HEK293T (cell line): ENCODE measurements at regions of chr14 and their contacts with region 1.

Region 1: DNA sequence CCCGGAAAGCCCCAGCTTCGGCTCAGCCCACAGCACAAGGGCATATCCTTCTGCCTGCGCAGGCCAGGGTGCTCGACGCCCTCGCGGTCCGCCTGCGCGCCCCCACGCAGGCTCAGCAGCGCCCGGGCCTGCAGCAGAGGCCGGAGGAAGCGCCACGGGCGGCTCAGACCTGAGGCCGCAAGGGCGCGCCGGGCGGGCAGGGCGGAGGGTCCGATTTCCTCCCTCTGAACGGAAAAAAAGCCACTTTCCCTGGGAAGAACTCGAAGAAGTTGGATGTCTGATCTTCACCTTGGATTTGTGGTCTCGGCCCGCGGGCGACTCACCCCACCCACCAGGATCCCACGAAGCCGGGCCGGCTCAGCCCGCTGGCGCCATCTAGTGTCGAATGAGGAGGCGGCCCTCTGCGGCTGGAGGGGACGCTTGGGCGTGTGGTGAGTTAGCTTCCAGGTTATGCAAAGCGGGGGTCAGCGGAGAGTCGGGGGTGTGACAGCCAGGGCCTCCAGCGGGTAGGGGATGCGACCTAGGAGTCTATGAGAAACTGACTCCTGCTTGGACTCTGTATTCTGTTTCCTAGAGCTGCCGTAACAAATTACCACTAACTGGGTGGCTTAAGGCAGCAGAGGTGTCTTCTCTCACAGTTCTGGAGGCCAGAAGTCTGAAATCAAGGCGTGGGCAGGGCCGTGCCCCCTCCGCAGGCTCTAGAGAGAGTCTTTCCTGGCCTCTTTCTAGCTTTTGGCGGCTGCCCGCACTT is 40.0 kb upstream of the SRSF5 start:
- DNase-seq: peak; percentile 89

Region 2: GRCh38 chr14:69451956-69452355 is 275.0 kb before region 1 on chr14:
- CTCF ChIA-PET with region 1: no interaction called
- POLR2A ChIA-PET with region 1: no interaction called
- DNase-seq: no peak

Region 3: GRCh38 chr14:69584389-69584788 is 142.5 kb before region 1 on chr14:
- CTCF ChIA-PET with region 1: interaction called, 16 read pairs
- POLR2A ChIA-PET with region 1: no interaction called
- DNase-seq: no peak

Region 4: DNA sequence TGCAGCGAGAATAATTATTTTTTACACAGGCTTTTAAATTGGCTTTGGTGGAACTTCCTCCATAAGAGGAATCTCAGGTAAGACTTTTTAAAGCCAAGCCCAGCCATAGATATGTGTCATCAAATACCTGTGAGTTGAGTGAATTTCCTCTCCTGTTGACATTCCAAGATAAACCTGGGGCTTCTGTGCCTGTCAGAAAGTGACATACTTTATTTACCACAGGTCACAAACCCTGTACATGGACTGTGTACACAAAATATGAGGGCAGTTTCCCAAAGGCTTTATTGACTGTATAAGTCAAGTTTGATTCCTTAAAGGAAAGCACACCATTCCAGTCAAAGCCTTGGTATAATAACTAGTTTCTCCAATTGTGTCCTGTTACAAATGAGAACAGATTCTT is 14.1 kb after region 1 on chr14:
- CTCF ChIA-PET with region 1: no interaction called
- POLR2A ChIA-PET with region 1: no interaction called
- DNase-seq: no peak